Pancreas (tissue), 10 donors: ENCODE measurements at regions of chr9 and their contacts with region 1.

Region 1: DNA sequence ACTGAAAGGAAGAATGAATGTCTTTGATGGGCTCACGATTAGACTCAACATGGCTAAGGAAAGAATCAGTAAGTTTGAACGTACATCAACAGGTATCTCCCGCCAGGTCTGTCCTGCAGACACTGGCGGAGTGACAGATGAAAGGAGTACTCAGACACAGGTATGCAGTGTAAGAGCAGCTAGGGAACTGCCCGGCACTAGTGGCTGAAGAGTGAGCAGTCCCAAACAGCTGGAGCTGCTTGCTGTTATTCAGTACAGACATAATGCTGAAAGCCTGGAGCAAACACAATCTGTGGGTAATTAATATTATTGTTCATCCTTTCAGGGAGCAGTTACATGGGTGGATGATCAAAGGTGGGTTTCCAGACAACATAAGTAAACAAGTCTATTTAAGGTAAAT is 835.5 kb downstream of the TLE4 start:
- DNase-seq: no peak
- ATAC-seq: no peak
- H3K4me3 ChIP-seq: no peak overlapping the region
- H3K27ac ChIP-seq: no peak overlapping the region
- H3K4me1 ChIP-seq: no peaks in the 10 kb centered on the region
- H3K27me3 ChIP-seq: no peaks in the 10 kb centered on the region
- CTCF ChIP-seq: no peak

Region 2: DNA sequence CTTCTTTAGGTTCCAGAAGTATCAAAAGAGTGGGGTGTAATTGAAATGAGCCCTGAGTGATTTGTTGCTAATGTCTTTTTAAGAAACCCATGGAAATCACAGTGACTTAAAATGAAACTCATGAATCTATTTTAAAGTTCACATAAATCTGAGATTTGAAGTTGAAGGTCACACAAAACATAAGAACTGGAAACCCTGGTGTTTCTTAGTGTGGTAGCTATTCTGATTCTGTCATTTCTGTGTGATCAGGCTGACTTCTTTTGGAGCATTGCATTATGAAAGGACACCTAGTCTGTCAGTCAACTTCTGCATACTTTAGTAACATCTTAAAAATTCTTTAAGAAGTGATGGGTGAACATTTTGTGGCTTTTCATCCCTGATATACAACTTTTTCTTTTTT is 386.7 kb before region 1 on chr9:
- intact Hi-C with region 1: no loop called
- DNase-seq: no peak
- ATAC-seq: no peak
- H3K4me3 ChIP-seq: no peak overlapping the region
- H3K27ac ChIP-seq: no peak overlapping the region
- H3K4me1 ChIP-seq: no peaks in the 10 kb centered on the region
- H3K27me3 ChIP-seq: no peaks in the 10 kb centered on the region
- CTCF ChIP-seq: no peak

Region 3: DNA sequence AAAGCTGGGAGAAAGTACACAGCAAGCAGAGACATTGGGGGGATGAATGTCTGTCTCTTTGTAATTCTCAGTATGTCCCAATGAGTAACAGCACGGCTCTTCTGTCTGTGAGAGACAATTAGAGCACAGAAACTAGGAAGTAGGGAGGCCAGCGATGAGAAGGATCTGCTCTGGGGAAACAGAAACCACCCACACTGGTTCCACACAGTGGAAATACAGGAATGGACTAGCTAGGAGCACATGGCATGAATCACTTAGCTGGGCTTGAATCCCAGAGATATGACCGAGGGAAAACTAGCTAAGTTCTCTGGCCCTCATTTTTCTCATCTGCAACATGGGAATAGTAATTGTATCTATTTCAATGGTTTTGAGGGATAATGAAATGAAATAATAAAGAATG is 60.4 kb after region 1 on chr9:
- intact Hi-C with region 1: loop called in 1 of 3 experiments (anchors 10 kb)
- DNase-seq: no peak
- ATAC-seq: peak in 2 of 4 donors; percentile 23 to 34
- H3K4me3 ChIP-seq: no peak overlapping the region
- H3K27ac ChIP-seq: no peak overlapping the region
- H3K4me1 ChIP-seq: no peaks in the 10 kb centered on the region
- H3K27me3 ChIP-seq: no peaks in the 10 kb centered on the region
- CTCF ChIP-seq: no peak